ENCODE measurements at regions of chr3 and their contacts with region 1.

Region 1: DNA sequence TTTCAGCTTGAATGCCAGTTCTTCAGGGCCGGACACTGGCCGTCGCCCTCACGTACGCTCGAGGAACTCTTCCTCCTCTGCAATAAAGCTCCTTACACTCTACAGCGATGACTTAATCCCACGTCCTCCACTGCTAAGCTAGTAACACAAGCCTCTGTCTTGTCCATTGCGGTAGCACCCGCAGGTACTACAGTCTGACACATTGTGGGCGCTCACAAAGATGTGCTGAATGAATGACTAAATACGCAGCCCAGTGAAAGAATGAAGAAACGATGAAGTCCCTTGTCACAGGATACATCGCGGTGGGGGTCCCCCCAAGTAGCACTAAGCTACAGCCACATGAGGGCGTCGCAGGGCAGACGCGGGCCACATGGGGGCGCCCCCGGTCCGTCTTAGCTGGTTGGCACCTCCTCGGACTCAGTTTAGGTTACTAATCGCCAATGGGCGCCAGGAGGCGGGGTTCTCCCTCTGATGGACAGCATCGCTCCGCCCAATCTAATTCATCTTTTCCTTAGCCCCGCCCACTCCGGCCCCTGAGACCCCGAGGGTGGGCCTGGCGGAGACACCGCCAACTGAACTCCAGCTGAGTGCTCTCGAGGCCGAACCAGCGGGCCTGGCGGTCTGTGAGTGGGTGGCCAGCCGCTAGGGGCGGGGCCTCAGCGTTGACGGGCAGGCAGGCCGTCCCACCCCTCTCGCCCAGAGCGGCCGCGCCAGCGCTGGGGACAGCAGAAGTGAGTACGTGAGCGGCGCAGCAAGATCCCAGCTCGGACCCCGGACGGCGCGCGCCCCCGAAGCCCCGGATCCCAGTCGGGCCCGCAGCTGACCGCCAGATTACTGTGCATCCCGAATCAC is at the start of gene EPHB3:
- DNase-seq: peak; percentile 99
- ATAC-seq: peak; percentile 98
- total RNA-seq, gene EPHB3: 1.6 TPM

Region 2: DNA sequence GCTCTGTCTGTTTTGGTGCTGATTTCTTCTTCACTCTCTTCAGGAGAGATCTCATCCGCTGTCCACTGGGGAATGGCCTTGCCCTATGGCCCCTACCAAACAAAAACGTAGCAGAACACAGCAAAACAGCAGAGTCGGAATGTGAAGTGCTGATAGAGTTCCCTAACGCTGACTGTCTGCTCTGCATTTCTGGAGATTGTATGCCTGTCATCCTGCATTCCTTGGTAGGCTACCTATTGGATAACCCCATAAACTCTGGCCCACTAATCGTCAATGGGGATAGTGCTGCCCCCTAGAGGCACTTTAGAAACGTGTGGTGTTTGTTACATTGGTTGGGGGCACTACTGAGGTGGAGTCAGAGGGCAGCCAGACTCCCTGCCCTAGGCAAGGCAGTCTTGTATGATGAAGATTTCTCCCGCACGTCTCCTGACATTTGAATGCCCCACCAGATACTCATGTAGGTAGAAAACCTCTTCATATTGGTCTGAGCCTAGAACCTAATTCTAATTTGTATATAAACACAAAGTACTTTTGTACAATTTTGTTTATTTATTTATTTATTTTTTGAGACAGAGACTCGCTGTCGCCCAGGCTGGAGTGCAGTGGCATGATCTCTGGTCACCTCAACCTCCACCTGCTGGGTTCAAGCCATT is 166.2 kb after region 1 on chr3:
- intact Hi-C with region 1: loop called (anchors 1 kb)
- DNase-seq: no peak
- ATAC-seq: peak; percentile 84

Region 3: GRCh38 chr3:184757022-184757651 is 195.8 kb after region 1 on chr3:
- intact Hi-C with region 1: no loop called
- DNase-seq: peak; percentile 81
- ATAC-seq: peak; percentile 85